ENCODE measurements at regions of chr18 and their contacts with region 1.

Region 1: GRCh38 chr18:21612125-21612991 is at the start of gene SNRPD1:
- DNase-seq: peak; percentile 88
- H3K4me3 Mint-ChIP-seq: peak within 1 kb of the TSS; percentile 98
- H3K27ac Mint-ChIP-seq: peak within 1 kb of the TSS; percentile 99
- H3K4me1 Mint-ChIP-seq: peaks cover 19% of the 10 kb centered on the region
- H3K27me3 Mint-ChIP-seq: no peaks in the 10 kb centered on the region
- total RNA-seq, gene SNRPD1: 164 TPM in 2 replicates

Region 2: GRCh38 chr18:21484851-21485636 is 127.3 kb before region 1 on chr18:
- intact Hi-C with region 1: no loop called
- DNase-seq: no peak
- H3K4me3 Mint-ChIP-seq: no peak overlapping the region
- H3K27ac Mint-ChIP-seq: no peak overlapping the region
- H3K4me1 Mint-ChIP-seq: no peaks in the 10 kb centered on the region
- H3K27me3 Mint-ChIP-seq: peaks cover 4% of the 10 kb centered on the region

Region 3: DNA sequence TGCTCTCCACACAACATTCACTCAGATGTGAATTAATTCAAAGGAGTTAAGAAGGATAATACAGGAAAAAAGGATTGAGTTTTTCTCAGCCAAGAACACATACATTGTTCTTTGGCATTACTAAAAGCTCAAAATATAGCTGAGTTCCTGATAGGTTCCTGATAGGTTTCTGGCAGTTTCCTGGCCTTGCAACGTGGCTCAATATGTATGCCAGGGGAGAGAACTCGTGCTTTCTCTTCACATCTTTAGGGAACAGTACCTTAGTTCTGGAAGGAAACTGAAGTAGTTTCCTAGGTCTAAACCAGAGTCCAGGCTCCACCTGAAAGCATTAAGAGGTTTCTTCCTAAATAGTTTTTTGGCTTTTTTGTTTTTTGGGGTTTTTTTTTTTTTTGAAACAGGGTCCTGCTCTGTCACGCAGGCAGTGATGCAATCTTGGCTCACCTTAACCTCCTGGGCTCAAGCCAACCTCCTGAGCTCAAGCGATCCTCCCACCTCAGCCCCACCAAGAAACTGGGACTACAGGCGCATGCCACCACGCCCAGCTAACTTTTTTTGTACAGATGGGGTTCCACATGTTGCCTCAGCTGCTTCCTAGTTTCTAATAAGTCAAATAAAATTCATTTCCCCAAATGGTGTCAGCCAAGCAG is 54.6 kb before region 1 on chr18:
- intact Hi-C with region 1: loop called (anchors 10 kb)
- DNase-seq: no peak
- H3K4me3 Mint-ChIP-seq: no peak overlapping the region
- H3K27ac Mint-ChIP-seq: no peak overlapping the region
- H3K4me1 Mint-ChIP-seq: peaks cover 1% of the 10 kb centered on the region
- H3K27me3 Mint-ChIP-seq: no peaks in the 10 kb centered on the region

Region 4: GRCh38 chr18:21600526-21601410 is 11.6 kb before region 1 on chr18 and contains the start of gene ESCO1:
- intact Hi-C with region 1: loop called (anchors 1 kb)
- DNase-seq: peak; percentile 95
- H3K4me3 Mint-ChIP-seq: peak within 1 kb of the TSS; percentile 98
- H3K27ac Mint-ChIP-seq: peak within 1 kb of the TSS; percentile 84
- H3K4me1 Mint-ChIP-seq: peaks cover 23% of the 10 kb centered on the region
- H3K27me3 Mint-ChIP-seq: peaks cover 3% of the 10 kb centered on the region
- total RNA-seq, gene ESCO1: 20.5 and 21.4 TPM in 2 replicates

Region 5: GRCh38 chr18:21682371-21683051 is 70.2 kb after region 1 on chr18:
- intact Hi-C with region 1: loop called (anchors 5 kb)
- DNase-seq: peak; percentile 14
- H3K4me3 Mint-ChIP-seq: no peak overlapping the region
- H3K27ac Mint-ChIP-seq: no peak overlapping the region
- H3K4me1 Mint-ChIP-seq: peaks cover 14% of the 10 kb centered on the region
- H3K27me3 Mint-ChIP-seq: no peaks in the 10 kb centered on the region

Region 6: GRCh38 chr18:21704603-21705364 is 92.4 kb after region 1 on chr18 and contains the start of gene ABHD3:
- intact Hi-C with region 1: loop called (anchors 1 kb)
- DNase-seq: peak; percentile 90
- H3K4me3 Mint-ChIP-seq: peak within 1 kb of the TSS; percentile 96
- H3K27ac Mint-ChIP-seq: peak within 1 kb of the TSS; percentile 89
- H3K4me1 Mint-ChIP-seq: peaks cover 21% of the 10 kb centered on the region
- H3K27me3 Mint-ChIP-seq: no peaks in the 10 kb centered on the region
- total RNA-seq, gene ABHD3: 29.6 and 31.2 TPM in 2 replicates

Region 7: GRCh38 chr18:21740724-21741510 is 128.6 kb after region 1 on chr18 and contains the start of gene MIB1:
- intact Hi-C with region 1: loop called (anchors 2 kb)
- DNase-seq: peak; percentile 36
- H3K4me3 Mint-ChIP-seq: peak within 1 kb of the TSS; percentile 96
- H3K27ac Mint-ChIP-seq: peak within 1 kb of the TSS; percentile 97
- H3K4me1 Mint-ChIP-seq: peaks cover 35% of the 10 kb centered on the region
- H3K27me3 Mint-ChIP-seq: no peaks in the 10 kb centered on the region
- total RNA-seq, gene MIB1: 45.0 and 45.7 TPM in 2 replicates

Region 8: GRCh38 chr18:21841570-21841969 is 229.2 kb after region 1 on chr18:
- intact Hi-C with region 1: loop called (anchors 10 kb)
- DNase-seq: no peak
- H3K4me3 Mint-ChIP-seq: no peak overlapping the region
- H3K27ac Mint-ChIP-seq: no peak overlapping the region
- H3K4me1 Mint-ChIP-seq: no peaks in the 10 kb centered on the region
- H3K27me3 Mint-ChIP-seq: no peaks in the 10 kb centered on the region

Measured in activated T-helper 2 cell treated with anti-CD3 and anti-CD28 coated beads, Interferon-gamma antibody, Interleukin-2, Interleukin-4, amounts not matched to agents 10 μg/mL and 5 μg/mL and 100 μg/mL, durations not matched to agents 14 hours and 24 hours and 36 hours (primary cell).